ENCODE measurements at regions of chr6 and their contacts with region 1.

Region 1: DNA sequence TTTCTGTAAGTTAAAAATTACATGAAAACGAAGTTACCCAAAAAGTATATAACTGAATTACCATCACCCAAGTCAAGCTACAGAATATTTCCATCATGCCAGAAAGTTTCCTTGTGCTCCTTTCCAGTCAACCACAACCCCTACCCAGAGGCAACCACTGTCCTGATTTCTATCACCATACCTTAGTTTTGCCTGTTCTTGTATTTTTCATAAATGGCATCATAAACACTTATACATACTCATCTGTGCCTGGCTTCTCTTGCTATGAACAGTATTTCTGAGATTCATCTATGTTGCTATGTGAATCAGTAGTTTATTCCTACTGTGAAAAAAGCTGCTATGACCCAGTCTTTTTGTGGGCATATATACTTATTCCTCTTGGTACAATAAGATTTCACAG is 7.4 kb downstream of the FKBP5 start:
- DNase-seq: no peak
- ATAC-seq: no peak
- H3K4me3 ChIP-seq: no peak overlapping the region
- H3K4me3 Mint-ChIP-seq: peak overlapping the region; percentile 4
- H3K27ac ChIP-seq: no peak overlapping the region
- H3K27ac Mint-ChIP-seq: peak overlapping the region; percentile 79
- H3K4me1 ChIP-seq: peaks cover 56% of the 10 kb centered on the region
- H3K4me1 Mint-ChIP-seq: peaks cover 62% of the 10 kb centered on the region
- H3K27me3 ChIP-seq: no peaks in the 10 kb centered on the region
- H3K27me3 Mint-ChIP-seq: no peaks in the 10 kb centered on the region
- CTCF ChIP-seq: no peak

Region 2: DNA sequence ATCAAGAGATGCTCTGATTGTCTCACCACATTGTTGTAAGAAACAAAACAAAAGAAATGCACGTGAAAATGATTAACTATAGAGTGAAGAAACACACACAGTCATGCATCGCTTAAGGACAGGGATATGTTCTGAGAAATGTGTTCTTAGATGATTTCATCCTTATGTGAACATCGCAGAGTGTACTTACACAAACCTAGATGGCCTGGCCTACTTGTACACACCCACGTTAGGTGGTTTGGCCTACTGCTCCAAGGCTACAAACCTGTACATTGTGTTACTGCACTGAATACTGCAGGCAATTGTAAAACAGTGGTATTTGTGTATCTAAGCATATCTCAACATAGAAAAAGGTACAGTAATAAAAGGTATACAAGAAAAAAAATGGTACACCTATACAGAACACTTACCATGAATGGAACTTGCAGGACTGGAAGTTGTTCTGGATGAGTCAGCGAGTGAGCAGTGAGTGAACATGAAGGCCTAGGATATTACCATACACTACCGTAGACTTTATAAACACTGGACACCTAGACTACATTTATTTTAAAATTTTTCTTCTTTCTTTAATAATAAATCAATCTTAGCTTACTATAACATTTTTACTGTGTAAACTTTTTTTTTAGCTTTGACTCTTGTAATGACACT is 41.2 kb before region 1 on chr6:
- CTCF ChIA-PET with region 1: no interaction called
- POLR2A ChIA-PET with region 1: no interaction called
- intact Hi-C with region 1: loop called (anchors 5 kb)
- DNase-seq: no peak
- ATAC-seq: no peak
- H3K4me3 ChIP-seq: no peak overlapping the region
- H3K4me3 Mint-ChIP-seq: no peak overlapping the region
- H3K27ac ChIP-seq: no peak overlapping the region
- H3K27ac Mint-ChIP-seq: peak overlapping the region; percentile 83
- H3K4me1 ChIP-seq: peaks cover 21% of the 10 kb centered on the region
- H3K4me1 Mint-ChIP-seq: peaks cover 59% of the 10 kb centered on the region
- H3K27me3 ChIP-seq: no peaks in the 10 kb centered on the region
- H3K27me3 Mint-ChIP-seq: no peaks in the 10 kb centered on the region
- CTCF ChIP-seq: no peak

Region 3: GRCh38 chr6:35669451-35670045 is 11.8 kb before region 1 on chr6:
- CTCF ChIA-PET with region 1: interaction called, 7 read pairs
- POLR2A ChIA-PET with region 1: interaction called, 5 read pairs
- intact Hi-C with region 1: loop called in 1 of 2 experiments (anchors 1 kb)
- DNase-seq: peak in 2 of 9 experiments; percentile 37 to 64
- ATAC-seq: peak; percentile 63
- H3K4me3 ChIP-seq: peak overlapping the region; percentile 21 to 26
- H3K4me3 Mint-ChIP-seq: peak overlapping the region; percentile 73
- H3K27ac ChIP-seq: peak overlapping the region; percentile 17 to 62
- H3K27ac Mint-ChIP-seq: peak overlapping the region; percentile 89
- H3K4me1 ChIP-seq: peaks cover 73% of the 10 kb centered on the region
- H3K4me1 Mint-ChIP-seq: peaks cover 50% of the 10 kb centered on the region
- H3K27me3 ChIP-seq: no peaks in the 10 kb centered on the region
- H3K27me3 Mint-ChIP-seq: no peaks in the 10 kb centered on the region
- CTCF ChIP-seq: no peak

Measured in CD8-positive, alpha-beta T cell (primary cell).